Naive thymus-derived CD4-positive, alpha-beta T cell (primary cell): ENCODE measurements at regions of chr1 and their contacts with region 1.

Region 1: DNA sequence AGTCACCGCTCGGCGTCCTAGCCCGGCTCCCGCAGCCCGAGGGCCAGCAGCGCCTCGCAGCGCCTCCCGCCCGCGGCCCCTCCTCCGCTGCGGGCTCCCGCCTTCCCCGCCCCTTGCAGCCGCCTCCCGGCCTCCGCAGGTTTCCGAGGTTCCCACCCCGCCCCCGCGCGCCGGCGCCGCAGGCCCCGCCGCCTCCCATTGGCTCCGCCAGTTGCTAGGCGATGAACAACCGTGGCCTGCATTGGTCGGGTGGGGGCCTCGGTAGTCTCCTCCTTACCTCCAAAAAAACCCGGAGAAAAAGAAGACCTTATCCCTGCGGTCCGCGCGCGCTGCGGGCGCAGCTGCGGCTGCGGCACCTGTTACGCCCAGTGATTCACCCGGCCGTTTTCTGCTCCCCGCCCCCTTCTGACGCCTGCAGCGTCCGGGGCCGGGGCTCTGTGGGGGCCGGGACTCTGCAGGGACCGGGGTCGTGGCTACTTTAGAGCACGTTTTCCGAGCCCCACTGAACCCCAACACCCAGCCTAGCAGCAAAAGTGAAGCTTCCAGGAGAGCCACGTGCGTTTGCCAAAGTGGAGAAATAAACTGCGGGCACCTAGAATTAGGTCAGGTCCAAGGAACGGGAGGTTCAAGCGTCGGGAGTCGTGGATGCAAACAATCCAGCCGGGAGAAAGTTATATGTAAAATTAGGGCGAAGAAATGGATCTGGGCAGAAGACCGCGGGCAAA is at the start of gene SSX2IP:
- DNase-seq: peak; percentile 97 to 100 (median 99)
- ATAC-seq: peak; percentile 94
- H3K4me3 ChIP-seq: peak within 1 kb of the TSS; percentile 85
- H3K4me3 Mint-ChIP-seq: peak within 1 kb of the TSS; percentile 85 to 99 (median 92)
- H3K27ac ChIP-seq: peak within 1 kb of the TSS; percentile 82
- H3K27ac Mint-ChIP-seq: peak within 1 kb of the TSS; percentile 92 to 98 (median 96)
- H3K4me1 ChIP-seq: peaks cover 3 to 24% of the 10 kb centered on the region in 2 donors
- H3K4me1 Mint-ChIP-seq: peaks cover 29 to 76% (median 60%) of the 10 kb centered on the region in 7 donors
- H3K27me3 ChIP-seq: no peaks in the 10 kb centered on the region
- H3K27me3 Mint-ChIP-seq: no peaks in the 10 kb centered on the region
- total RNA-seq, gene SSX2IP: 7.5 to 13.4 (median 8.1) TPM

Region 2: DNA sequence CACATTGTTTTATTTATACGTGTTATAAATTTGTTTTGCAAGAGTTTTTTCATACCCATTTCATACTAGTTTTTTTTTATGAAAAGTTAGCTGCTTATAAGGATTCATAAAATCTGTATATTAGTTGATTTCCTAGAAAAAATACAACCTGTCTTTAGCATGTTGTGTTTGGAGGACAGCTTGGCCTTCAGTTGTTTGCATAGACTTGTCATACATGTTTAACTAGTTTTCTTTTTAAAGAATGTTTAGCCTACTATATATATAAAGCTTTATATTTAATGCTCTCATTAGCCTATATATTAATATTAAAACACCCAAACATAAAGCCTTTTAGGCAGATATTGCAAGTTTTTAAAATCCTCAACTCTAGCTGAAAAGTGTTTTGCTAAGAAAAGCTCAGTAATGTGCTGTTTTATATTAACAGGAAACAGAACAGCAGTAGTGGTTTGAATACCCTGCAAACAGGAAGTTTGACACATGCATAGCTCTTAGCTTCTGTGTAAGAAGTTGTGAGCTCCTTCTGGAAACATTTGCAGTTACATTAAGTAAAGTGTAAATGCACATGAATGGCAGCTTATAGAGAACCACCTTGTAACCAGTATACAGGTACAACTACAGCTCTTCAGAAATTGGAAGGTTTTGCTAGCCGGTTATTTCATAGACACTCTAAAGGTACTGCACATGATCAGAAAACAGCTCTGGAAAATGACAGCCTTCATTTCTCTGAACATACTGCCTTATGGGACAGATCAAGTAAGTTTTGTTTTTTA is 546.6 kb before region 1 on chr1 and contains the start of gene PRKACB:
- CTCF ChIA-PET with region 1: interaction called, 3 read pairs
- POLR2A ChIA-PET with region 1: interaction called, 7 read pairs
- intact Hi-C with region 1: loop called (anchors 1 to 2 kb)
- DNase-seq: peak in 7 of 9 donors; percentile 59 to 79 (median 70)
- ATAC-seq: peak; percentile 94
- H3K4me3 ChIP-seq: peak within 1 kb of the TSS; percentile 71
- H3K4me3 Mint-ChIP-seq: peak within 1 kb of the TSS; percentile 88 to 100 (median 96)
- H3K27ac ChIP-seq: peak within 1 kb of the TSS; percentile 74
- H3K27ac Mint-ChIP-seq: peak within 1 kb of the TSS; percentile 97 to 100 (median 99)
- H3K4me1 ChIP-seq: peaks cover 27 to 33% of the 10 kb centered on the region in 2 donors
- H3K4me1 Mint-ChIP-seq: peaks cover 17 to 51% (median 39%) of the 10 kb centered on the region in 7 donors
- H3K27me3 ChIP-seq: no peaks in the 10 kb centered on the region
- H3K27me3 Mint-ChIP-seq: no peaks in the 10 kb centered on the region
- total RNA-seq, gene PRKACB: 71.1 to 176 (median 89.3) TPM

Region 3: GRCh38 chr1:84478876-84479868 is 211.4 kb before region 1 on chr1 and contains the start of gene RPF1:
- CTCF ChIA-PET with region 1: no interaction called
- POLR2A ChIA-PET with region 1: interaction called, 3 read pairs
- intact Hi-C with region 1: loop called (anchors 1 kb)
- DNase-seq: peak; percentile 61 to 88 (median 83)
- ATAC-seq: peak; percentile 97
- H3K4me3 ChIP-seq: peak within 1 kb of the TSS; percentile 72
- H3K4me3 Mint-ChIP-seq: peak within 1 kb of the TSS; percentile 88 to 100 (median 98)
- H3K27ac ChIP-seq: peak within 1 kb of the TSS; percentile 80
- H3K27ac Mint-ChIP-seq: peak within 1 kb of the TSS; percentile 98 to 100 (median 99)
- H3K4me1 ChIP-seq: peaks cover 22 to 28% of the 10 kb centered on the region in 2 donors
- H3K4me1 Mint-ChIP-seq: peaks cover 29 to 60% (median 49%) of the 10 kb centered on the region in 7 donors
- H3K27me3 ChIP-seq: peaks cover 0 to 7% of the 10 kb centered on the region in 2 donors
- H3K27me3 Mint-ChIP-seq: peaks cover 21 to 35% (median 26%) of the 10 kb centered on the region in 5 donors
- total RNA-seq, gene RPF1: 35.5 to 52.3 (median 44.1) TPM

Region 4: GRCh38 chr1:84653130-84653677 is 37.4 kb before region 1 on chr1:
- CTCF ChIA-PET with region 1: no interaction called
- POLR2A ChIA-PET with region 1: no interaction called
- intact Hi-C with region 1: loop called in 1 of 2 experiments (anchors 1 kb)
- DNase-seq: no peak
- ATAC-seq: no peak
- H3K4me3 ChIP-seq: no peak overlapping the region
- H3K4me3 Mint-ChIP-seq: no peak overlapping the region
- H3K27ac ChIP-seq: no peak overlapping the region
- H3K27ac Mint-ChIP-seq: no peak overlapping the region
- H3K4me1 ChIP-seq: no peaks in the 10 kb centered on the region
- H3K4me1 Mint-ChIP-seq: no peaks in the 10 kb centered on the region
- H3K27me3 ChIP-seq: no peaks in the 10 kb centered on the region
- H3K27me3 Mint-ChIP-seq: no peaks in the 10 kb centered on the region

Region 5: GRCh38 chr1:84853741-84854721 is 163.5 kb after region 1 on chr1:
- CTCF ChIA-PET with region 1: no interaction called
- POLR2A ChIA-PET with region 1: no interaction called
- intact Hi-C with region 1: loop called in 1 of 2 experiments (anchors 2 kb)
- DNase-seq: peak in 8 of 9 donors; percentile 16 to 56 (median 41)
- ATAC-seq: peak; percentile 96
- H3K4me3 ChIP-seq: no peak overlapping the region
- H3K4me3 Mint-ChIP-seq: peak overlapping the region in 6 of 10 donors; percentile 0 to 70 (median 14)
- H3K27ac ChIP-seq: peak overlapping the region; percentile 5
- H3K27ac Mint-ChIP-seq: peak overlapping the region; percentile 54 to 98 (median 87)
- H3K4me1 ChIP-seq: peaks cover 14 to 17% of the 10 kb centered on the region in 2 donors
- H3K4me1 Mint-ChIP-seq: peaks cover 23 to 52% (median 45%) of the 10 kb centered on the region in 7 donors
- H3K27me3 ChIP-seq: no peaks in the 10 kb centered on the region
- H3K27me3 Mint-ChIP-seq: peaks cover 0 to 8% (median 0%) of the 10 kb centered on the region in 5 donors

Region 6: DNA sequence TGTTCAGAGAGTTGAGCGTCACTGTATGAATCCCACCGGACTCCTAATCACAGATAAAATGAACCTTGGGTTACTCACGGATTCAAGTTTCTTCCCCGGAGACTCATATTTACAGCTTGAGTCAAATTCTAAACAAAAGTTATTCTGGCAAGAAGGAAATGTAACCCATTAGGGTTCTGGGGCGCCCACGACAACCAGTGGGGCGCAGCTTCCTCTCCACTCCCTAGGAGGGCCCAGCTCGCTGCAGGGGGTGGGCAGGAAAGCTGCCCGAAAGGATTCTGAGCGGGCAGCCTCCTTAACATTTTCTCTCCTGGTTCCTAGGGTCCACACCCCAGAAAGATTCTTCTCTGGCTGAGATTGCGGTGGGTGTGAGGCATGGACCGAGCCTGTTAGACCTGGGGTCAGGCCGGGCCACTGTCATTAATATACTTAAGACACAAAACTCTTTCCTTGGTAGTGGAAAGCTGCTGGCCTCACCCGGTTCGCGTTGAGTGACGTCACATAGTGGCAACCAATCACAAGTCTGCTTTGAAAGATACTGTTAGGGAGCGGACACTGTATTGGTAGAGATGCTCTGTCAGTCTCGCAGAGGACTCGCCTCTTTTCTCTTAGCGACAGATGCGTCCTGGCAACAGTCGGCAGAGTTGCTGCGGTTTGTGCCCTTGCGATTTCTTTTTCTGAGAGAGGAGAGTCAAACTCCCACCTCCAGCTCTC is 371.3 kb after region 1 on chr1:
- CTCF ChIA-PET with region 1: no interaction called
- POLR2A ChIA-PET with region 1: no interaction called
- intact Hi-C with region 1: loop called in 1 of 2 experiments (anchors 5 kb)
- DNase-seq: peak; percentile 49 to 93 (median 86)
- ATAC-seq: peak; percentile 99
- H3K4me3 ChIP-seq: peak overlapping the region; percentile 57
- H3K4me3 Mint-ChIP-seq: peak overlapping the region; percentile 79 to 93 (median 88)
- H3K27ac ChIP-seq: peak overlapping the region; percentile 24
- H3K27ac Mint-ChIP-seq: peak overlapping the region; percentile 57 to 96 (median 92)
- H3K4me1 ChIP-seq: peaks cover 4 to 6% of the 10 kb centered on the region in 2 donors
- H3K4me1 Mint-ChIP-seq: peaks cover 11 to 21% (median 14%) of the 10 kb centered on the region in 7 donors
- H3K27me3 ChIP-seq: no peaks in the 10 kb centered on the region
- H3K27me3 Mint-ChIP-seq: peaks cover 3 to 39% (median 13%) of the 10 kb centered on the region in 5 donors

Region 7: DNA sequence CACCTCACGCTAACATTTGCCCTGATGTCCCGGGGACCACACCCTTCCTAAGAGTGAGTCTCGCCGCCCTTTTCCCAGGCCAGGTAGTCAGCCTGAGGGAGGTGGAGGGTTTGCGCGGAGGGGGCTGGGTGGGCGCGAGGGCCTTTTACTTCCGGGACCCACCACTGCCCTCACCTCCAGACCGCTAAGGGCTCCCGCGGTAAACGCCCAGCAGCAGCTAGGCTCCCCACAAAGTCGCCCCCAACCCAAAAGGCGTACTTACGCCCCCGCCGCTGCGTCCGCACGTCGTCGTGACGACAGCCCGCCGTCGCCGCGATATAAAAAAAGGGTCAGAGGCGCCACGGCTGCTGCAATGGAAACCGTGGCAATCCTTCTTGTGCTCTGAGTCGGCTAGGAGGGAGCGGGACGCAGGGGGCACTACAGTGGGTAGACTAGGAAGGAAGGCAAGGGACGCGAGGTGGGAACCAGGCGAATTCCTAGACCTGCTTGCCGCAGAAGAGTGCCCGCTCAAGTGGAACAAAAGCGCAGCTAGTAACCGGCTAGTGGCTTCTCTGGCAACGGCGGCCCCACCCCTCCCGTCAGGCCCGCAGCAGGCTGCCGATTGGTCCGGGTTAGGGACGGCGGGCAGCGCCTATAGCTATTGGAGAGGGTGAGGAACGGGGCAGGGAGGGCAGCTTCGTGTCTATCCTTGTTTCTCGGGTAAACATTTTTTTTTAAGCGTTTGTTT is 1705.4 kb after region 1 on chr1 and contains the start of gene ODF2L:
- CTCF ChIA-PET with region 1: no interaction called
- POLR2A ChIA-PET with region 1: no interaction called
- intact Hi-C with region 1: loop called in 1 of 2 experiments (anchors 1 kb)
- DNase-seq: peak; percentile 73 to 92 (median 90)
- ATAC-seq: peak; percentile 100
- H3K4me3 ChIP-seq: peak within 1 kb of the TSS; percentile 80
- H3K4me3 Mint-ChIP-seq: peak within 1 kb of the TSS; percentile 90 to 100 (median 98)
- H3K27ac ChIP-seq: peak within 1 kb of the TSS; percentile 90
- H3K27ac Mint-ChIP-seq: peak within 1 kb of the TSS; percentile 94 to 99 (median 98)
- H3K4me1 ChIP-seq: peaks cover 17 to 20% of the 10 kb centered on the region in 2 donors
- H3K4me1 Mint-ChIP-seq: peaks cover 23 to 70% (median 58%) of the 10 kb centered on the region in 7 donors
- H3K27me3 ChIP-seq: no peaks in the 10 kb centered on the region
- H3K27me3 Mint-ChIP-seq: peaks cover 0 to 7% (median 0%) of the 10 kb centered on the region in 5 donors
- total RNA-seq, gene ODF2L: 50.3 to 75.3 (median 52.2) TPM